ENCODE measurements at regions of chr19 and their contacts with region 1.

Region 1: GRCh38 chr19:44954824-44955586 is at the start of gene CLPTM1:
- DNase-seq: peak; percentile 73
- H3K4me3 ChIP-seq: peak within 1 kb of the TSS; percentile 77
- H3K27me3 ChIP-seq: no peaks in the 10 kb centered on the region
- CTCF ChIP-seq: no peak
- polyA plus RNA-seq, gene CLPTM1: 65.2 and 127 TPM in 2 replicates

Region 2: DNA sequence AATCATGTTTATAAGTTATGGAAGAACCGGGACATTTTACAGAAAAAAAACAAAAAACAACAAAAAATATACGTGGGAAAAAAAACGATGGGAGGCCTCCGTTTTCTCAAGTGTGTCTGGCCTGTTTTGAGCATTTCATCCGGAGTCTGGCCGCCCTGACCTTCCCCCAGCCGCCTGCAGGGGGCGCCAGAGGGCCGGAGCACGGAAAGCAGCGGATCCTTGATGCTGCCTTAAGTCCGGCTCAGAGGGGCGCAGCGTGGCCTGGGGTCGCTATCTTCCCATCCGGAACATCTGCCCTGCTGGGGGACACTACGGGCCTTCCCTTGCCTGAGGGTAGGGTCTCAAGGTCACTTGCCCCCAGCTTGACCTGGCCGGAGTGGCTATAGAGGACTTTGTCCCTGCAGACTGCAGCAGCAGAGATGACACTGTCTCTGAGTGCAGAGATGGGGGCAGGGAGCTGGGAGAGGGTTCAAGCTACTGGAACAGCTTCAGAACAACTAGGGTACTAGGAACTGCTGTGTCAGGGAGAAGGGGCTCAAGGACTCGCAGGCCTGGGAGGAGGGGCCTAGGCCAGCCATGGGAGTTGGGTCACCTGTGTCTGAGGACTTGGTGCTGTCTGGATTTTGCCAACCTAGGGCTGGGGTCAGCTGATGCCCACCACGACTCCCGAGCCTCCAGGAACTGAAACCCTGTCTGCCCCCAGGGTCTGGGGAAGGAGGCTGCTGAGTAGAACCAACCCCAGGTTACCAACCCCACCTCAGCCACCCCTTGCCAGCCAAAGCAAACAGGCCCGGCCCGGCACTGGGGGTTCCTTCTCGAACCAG is 51.2 kb before region 1 on chr19:
- CTCF ChIA-PET with region 1: interaction called, 151 read pairs
- POLR2A ChIA-PET with region 1: no interaction called
- DNase-seq: no peak
- H3K4me3 ChIP-seq: no peak overlapping the region
- H3K27me3 ChIP-seq: peaks cover 3% of the 10 kb centered on the region
- CTCF ChIP-seq: peak; percentile 99

Region 3: GRCh38 chr19:44912854-44913253 is 42.2 kb before region 1 on chr19:
- CTCF ChIA-PET with region 1: interaction called, 151 read pairs
- POLR2A ChIA-PET with region 1: interaction called, 3 read pairs
- DNase-seq: no peak
- H3K4me3 ChIP-seq: no peak overlapping the region
- H3K27me3 ChIP-seq: no peaks in the 10 kb centered on the region
- CTCF ChIP-seq: no peak

Region 4: DNA sequence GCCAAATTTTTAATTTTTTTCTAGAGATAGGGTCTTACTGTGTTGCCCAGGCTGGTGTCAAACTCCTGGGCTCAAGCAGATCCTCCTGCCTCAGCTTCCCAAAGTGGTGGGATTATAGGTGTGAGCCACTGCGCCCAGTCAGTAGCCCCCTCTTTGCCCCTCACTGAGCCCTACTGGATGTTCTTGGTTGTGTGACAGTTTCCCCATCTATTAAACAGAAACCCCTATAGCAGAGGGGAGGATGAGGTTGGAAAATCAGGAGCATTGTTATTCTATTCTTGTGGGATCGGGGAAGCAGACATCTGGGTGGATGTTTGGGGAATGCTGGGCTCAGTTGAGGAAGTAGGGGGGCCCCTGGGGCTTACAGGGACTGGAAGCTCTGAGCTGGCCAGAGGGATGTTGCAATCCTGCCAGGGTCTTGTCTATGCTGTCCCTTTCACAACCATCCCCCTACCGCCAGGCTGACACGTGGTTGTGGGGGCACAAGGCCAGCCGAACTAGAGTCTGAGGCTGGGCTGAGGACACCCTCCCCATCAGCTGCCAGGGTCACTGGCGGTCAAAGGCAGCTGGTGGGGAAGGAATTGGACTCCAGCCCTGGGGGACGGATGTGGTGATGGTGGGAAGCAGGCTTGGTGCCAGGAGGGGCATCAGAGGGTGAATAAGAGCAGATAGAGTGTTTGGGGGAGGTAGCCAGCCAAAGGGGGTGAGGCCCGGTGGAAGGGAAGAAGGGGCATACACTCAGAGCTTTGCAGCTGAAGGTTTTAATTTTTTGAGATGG is 29.7 kb before region 1 on chr19:
- CTCF ChIA-PET with region 1: interaction called, 15 read pairs
- POLR2A ChIA-PET with region 1: no interaction called
- DNase-seq: no peak
- H3K4me3 ChIP-seq: no peak overlapping the region
- H3K27me3 ChIP-seq: no peaks in the 10 kb centered on the region; the same call in 1 of the 2 replicates
- CTCF ChIP-seq: no peak